Esophagus muscularis mucosa (tissue), 4 donors: ENCODE measurements at regions of chr2 and their contacts with region 1.

Region 1: DNA sequence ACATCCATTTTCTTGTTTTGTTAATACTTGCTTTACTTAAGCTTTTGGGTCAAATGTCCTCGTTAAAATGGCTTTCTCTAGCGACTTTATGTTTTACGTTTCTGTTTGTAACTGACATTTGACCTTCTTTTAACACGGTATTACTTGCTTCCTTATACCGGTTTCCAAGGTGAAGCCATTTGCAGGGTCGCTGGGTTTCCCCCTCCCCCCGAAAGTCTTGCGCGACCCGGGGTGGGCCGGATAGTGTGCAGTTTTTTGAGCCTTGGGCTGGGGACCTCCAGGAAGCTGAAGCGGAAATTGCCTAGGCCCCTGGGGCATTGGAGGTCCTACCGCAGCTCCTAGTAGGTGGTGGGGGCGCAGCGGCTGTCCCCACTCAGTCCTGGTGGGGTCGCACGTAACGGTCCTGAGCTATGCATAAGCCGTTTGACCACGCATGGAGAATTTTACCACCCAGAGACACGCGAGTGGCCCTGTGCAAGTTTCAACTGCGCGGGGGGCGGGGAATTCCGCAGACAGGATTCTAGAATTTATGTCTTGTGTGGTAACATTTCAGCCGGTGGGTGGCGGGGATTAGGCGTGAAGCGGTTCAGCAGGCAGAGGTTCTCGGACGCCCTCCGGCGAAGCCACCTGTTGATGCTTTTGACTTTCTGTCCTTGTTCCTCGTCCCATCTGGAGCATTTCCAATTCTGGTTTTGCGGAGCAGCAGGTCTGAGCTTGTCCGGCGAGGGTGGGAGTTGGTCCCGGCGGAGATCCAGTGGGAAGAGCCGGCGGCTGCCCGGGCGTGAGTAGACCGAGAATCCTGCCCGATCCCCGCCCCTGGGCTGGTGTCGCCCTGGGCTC is 2.4 kb downstream of the CFLAR start:
- DNase-seq: peak; percentile 98
- H3K4me3 ChIP-seq: peak overlapping the region; percentile 76 to 91 (median 86)
- H3K27ac ChIP-seq: peak overlapping the region; percentile 96 to 100 (median 98)
- H3K4me1 ChIP-seq: peaks cover 19 to 70% (median 57%) of the 10 kb centered on the region in 4 donors
- H3K27me3 ChIP-seq: no peaks in the 10 kb centered on the region
- CTCF ChIP-seq: peak; percentile 42 to 55 (median 49)
- EP300 ChIP-seq: no peak
- POLR2A ChIP-seq: no peak

Region 2: DNA sequence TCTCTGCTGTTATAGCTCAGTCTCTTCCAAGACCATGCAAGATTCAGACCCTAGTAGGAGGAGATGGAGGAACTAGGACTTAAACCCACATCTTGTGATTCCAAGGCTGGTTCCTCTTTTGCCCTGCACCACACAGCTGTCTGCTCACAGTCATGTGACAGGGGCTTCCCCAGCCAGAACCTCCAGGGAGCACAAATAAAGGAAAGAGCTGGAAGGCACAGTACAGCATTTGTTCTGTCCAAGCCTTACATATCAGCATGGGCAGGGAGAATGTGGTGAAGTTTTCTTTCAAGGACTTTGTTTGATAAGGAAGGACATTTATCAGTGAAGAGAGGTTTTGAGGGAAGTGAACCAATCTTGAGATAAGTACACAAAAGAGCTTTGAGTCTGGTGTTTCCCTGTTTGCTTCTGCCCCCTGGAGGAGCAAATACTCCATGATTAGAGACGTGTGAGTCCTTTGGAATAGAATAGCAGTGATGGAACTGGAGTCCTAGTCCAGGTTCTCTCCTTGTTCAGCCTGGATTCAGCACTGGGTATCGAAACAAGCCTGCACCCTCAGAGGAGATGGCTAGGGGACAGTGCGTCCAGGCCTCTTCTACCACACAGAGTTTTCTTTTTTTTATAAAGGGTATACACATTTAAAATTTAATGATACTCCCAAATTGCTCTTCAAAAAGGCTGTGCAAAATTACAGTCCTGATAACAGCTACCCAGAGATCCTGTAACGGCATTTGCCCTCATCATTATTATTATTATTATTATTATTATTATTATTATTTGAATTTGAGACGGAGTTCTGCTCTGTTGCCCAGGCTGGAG is 40.0 kb after region 1 on chr2:
- intact Hi-C with region 1: loop called (anchors 5 kb)
- DNase-seq: no peak
- H3K4me3 ChIP-seq: no peak overlapping the region
- H3K27ac ChIP-seq: peak overlapping the region; percentile 21 to 48 (median 33)
- H3K4me1 ChIP-seq: peaks cover 19 to 56% (median 52%) of the 10 kb centered on the region in 4 donors
- H3K27me3 ChIP-seq: no peaks in the 10 kb centered on the region
- CTCF ChIP-seq: peak; percentile 36 to 59 (median 57)
- EP300 ChIP-seq: no peak
- POLR2A ChIP-seq: no peak

Region 3: GRCh38 chr2:201466050-201466675 is 347.8 kb after region 1 on chr2:
- intact Hi-C with region 1: no loop called
- DNase-seq: no peak
- H3K4me3 ChIP-seq: no peak overlapping the region
- H3K27ac ChIP-seq: peak overlapping the region; percentile 37 to 52 (median 43)
- H3K4me1 ChIP-seq: peaks cover 0 to 27% (median 23%) of the 10 kb centered on the region in 4 donors
- H3K27me3 ChIP-seq: no peaks in the 10 kb centered on the region
- CTCF ChIP-seq: no peak
- EP300 ChIP-seq: no peak
- POLR2A ChIP-seq: no peak